Posterior cingulate gyrus (tissue), 11 donors: ENCODE measurements at regions of chr16 and their contacts with region 1.

Region 1: GRCh38 chr16:84186685-84187437 is at the start of gene TAF1C:
- DNase-seq: peak; percentile 79 to 98 (median 89)

Region 2: GRCh38 chr16:83967806-83968305 is 219.0 kb before region 1 on chr16 and contains the start of gene NECAB2:
- intact Hi-C with region 1: loop called (anchors 1 kb)
- DNase-seq: peak in 7 of 10 donors; percentile 46 to 92 (median 65)

Region 3: DNA sequence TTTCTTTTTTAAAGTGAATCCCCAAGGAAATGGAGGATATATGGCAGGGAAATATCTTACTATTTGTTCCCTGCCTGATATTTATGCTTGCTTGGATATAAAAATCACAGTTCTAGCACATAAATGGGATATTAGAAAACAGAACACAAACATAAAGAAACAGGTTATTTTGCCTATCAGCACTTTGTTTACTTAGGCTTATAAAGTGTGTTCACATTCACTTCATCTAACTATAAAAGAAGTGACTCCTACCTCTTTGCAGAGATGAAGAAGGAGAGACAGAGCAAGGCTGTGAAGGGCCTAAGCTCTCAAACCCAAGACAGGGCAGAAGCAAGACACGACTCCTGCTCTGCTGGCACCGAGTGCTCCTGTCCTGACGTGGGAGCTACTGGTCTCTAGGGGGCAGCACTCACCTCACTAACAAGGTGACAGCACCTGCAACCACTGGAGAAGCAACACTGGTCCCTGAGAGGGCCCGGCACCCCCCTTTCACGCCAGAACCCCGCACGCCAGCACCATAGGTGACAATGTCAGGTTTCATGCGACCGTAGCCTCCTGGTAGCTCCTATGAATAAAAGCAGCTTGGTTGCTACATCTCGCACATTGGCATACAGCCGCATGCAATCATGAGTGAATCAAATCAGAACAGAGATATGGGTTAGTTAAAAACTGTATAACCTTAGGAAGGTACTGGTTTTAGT is 102.1 kb before region 1 on chr16:
- intact Hi-C with region 1: loop called (anchors 10 kb)
- DNase-seq: peak in 5 of 10 donors; percentile 38 to 91 (median 49)

Region 4: DNA sequence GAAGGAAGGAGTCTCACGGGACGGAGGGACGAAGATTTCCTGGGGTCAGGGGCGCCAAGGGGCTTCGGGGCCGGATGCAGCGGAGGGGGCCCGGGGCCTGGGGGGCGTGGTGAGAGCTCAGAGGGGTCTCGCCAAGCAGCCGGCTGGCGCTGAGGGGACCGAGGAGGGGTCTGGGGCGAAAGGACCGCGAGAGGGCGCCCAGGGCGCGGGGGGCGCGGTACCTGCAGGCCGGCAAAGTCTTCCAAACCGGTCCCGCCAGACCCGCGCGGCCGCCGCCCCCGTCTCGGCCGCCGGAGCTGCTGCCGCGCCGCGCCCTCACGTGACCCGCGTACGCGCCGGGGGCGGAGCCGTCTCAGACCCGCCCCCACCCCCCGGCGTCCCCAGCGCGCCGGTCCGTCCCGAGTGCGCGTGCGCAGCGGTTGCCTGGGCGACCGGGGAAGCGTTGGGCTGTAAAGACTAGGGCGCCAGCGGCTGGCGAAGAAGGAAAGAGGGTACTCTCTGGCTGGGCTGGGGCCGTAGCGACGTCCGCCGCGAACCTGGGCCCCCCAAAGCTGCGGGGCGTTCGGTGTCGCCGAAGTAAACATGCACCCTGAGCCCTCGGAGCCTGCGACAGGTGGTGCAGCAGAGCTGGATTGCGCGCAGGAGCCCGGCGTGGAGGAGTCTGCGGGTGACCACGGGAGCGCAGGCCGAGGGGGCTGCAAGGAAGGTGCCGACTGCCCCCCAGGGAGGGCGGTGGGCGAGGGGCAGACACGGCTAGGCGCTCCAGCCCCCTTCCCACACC is 41.8 kb before region 1 on chr16 and contains the starts of genes DNAAF1 and HSDL1:
- intact Hi-C with region 1: loop called (anchors 5 kb)
- DNase-seq: peak; percentile 85 to 99 (median 94)

Region 5: DNA sequence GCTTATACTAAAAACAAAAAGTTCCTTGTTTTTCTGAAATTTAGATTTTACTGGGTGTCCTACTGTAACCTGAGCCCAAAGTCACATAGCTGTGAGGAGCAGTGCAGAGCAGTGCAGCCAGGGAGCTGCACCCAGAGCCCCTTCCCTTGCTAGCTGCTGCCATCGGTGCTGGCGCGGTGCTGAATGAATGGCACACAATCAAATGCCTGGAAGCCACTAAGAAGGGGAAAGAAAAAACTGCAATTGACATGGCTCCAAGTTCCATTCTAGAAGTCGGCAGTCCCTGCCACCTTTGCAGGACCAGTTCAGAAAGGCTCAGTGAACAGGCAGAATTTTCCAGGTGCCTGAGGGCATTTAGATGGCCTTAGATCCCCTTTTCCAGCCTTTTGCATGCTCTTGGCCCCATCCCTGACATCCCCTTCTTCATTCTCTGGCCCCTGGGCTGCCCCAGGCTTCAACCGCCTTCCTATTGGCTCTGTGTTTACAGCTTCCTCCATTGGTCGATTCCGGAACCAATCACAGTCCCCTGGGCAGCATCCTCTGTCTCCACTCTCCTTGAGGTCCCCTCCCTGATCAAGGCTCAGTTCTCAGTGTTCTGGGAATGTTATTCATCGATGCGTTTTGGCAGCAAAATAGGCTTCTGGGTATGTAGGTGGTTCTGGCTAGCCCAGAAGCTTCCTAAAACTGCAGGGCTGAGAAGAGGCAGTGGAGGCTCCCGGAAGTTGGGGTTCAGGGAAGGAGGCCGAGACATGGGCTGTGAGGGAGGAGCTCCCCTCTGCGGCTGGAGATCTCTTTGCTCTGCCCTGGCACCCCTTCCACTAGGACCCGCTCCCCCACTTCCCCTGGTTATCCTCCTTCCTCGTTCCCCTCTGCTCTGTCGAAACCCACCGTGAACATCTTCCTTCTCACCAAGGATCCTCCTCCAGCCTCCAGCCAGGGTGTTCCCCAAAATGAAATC is 219.4 kb after region 1 on chr16:
- intact Hi-C with region 1: loop called (anchors 2 kb)
- DNase-seq: peak; percentile 69 to 97 (median 82)